Naive thymus-derived CD4-positive, alpha-beta T cell (primary cell): ENCODE measurements at regions of chr1 and their contacts with region 1.

Region 1: DNA sequence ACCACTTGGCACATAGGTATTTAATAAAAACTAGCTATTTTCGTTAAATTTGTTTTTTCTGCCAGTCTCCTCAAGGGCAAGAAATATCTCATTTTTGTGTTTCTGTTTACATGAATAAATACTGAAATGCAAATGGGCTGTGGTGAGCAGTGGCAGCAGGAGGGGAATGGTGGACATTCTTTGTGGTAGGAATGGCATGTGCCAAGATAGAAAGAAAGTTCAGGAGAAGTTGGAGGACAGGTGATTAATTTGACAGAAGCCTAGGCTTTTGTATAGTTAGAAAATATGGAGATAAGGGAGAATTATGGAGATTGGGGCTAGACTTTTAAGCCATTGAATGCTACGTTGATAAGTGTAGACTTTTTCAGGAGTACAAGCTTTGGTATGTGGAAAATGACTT is 8.6 kb downstream of the RAP1A start:
- DNase-seq: no peak
- ATAC-seq: no peak
- H3K4me3 ChIP-seq: no peak overlapping the region
- H3K4me3 Mint-ChIP-seq: peak overlapping the region in 9 of 10 donors; percentile 57 to 86 (median 67)
- H3K27ac ChIP-seq: peak overlapping the region; percentile 59
- H3K27ac Mint-ChIP-seq: peak overlapping the region; percentile 64 to 91 (median 79)
- H3K4me1 ChIP-seq: peaks cover 77 to 86% of the 10 kb centered on the region in 2 donors
- H3K4me1 Mint-ChIP-seq: peaks cover 60 to 97% (median 88%) of the 10 kb centered on the region in 7 donors
- H3K27me3 ChIP-seq: no peaks in the 10 kb centered on the region
- H3K27me3 Mint-ChIP-seq: no peaks in the 10 kb centered on the region

Region 2: DNA sequence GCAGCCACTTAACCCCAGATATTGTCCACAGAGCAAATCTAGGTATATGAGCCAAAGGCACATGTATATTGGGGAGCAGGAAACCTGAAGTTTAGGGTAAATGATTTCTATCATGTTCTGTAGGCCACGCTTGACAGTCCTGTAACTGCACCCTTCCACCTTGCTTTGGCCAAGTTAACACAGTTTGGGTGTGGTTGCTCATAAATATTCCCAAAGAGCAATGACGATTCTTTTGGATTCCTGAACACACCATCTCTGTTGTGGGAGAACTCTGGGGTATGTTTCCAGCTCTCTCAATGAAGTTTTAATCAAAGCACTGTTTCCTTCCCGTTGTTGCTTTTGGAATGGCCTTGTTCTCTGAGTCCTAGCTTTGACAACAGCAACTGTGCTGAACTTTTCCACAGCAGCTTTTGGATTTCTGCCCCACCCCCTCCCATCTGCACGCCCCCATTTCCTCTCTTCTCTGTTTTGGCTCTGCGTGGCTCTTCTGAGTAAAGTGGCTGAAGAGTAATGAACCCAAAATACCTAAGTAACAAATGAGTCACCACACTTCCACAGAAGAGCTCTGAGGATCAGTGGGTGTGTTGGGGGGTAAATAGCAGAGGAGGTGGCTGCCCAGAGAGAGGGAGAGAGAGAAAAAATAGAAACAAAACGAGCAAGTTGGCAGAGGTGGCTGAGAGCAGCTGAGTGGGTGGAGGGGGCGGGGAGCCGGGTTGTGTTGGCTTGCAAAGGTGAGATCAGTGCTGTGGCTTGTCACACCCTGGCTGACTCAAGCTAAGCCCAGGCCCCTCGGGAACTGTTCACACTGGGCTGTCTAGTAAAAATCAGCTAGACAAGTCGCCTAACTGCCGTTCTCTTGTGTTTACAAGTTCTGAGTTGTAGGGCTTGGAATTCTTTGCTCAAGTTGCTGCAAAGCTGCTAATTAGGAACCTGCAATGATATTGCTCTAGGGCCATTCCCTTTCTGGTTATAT is 35.5 kb before region 1 on chr1:
- CTCF ChIA-PET with region 1: interaction called, 4 read pairs
- POLR2A ChIA-PET with region 1: interaction called, 173 read pairs
- intact Hi-C with region 1: no loop called
- DNase-seq: peak; percentile 22 to 86 (median 56)
- ATAC-seq: peak; percentile 91
- H3K4me3 ChIP-seq: peak overlapping the region; percentile 29
- H3K4me3 Mint-ChIP-seq: peak overlapping the region; percentile 52 to 82 (median 78)
- H3K27ac ChIP-seq: peak overlapping the region; percentile 62
- H3K27ac Mint-ChIP-seq: peak overlapping the region; percentile 83 to 95 (median 91)
- H3K4me1 ChIP-seq: peaks cover 55 to 65% of the 10 kb centered on the region in 2 donors
- H3K4me1 Mint-ChIP-seq: peaks cover 46 to 72% (median 62%) of the 10 kb centered on the region in 7 donors
- H3K27me3 ChIP-seq: no peaks in the 10 kb centered on the region
- H3K27me3 Mint-ChIP-seq: peaks cover 0 to 2% (median 0%) of the 10 kb centered on the region in 5 donors

Region 3: GRCh38 chr1:111639602-111640198 is 11.5 kb after region 1 on chr1:
- CTCF ChIA-PET with region 1: interaction called, 4 read pairs
- POLR2A ChIA-PET with region 1: interaction called, 6 read pairs
- intact Hi-C with region 1: loop called in 1 of 2 experiments (anchors 1 kb)
- DNase-seq: no peak
- ATAC-seq: no peak
- H3K4me3 ChIP-seq: no peak overlapping the region
- H3K4me3 Mint-ChIP-seq: peak overlapping the region in 1 of 10 donors; percentile 21
- H3K27ac ChIP-seq: no peak overlapping the region
- H3K27ac Mint-ChIP-seq: peak overlapping the region in 5 of 9 donors; percentile 28 to 59 (median 44)
- H3K4me1 ChIP-seq: peaks cover 37 to 41% of the 10 kb centered on the region in 2 donors
- H3K4me1 Mint-ChIP-seq: peaks cover 43 to 85% (median 75%) of the 10 kb centered on the region in 7 donors
- H3K27me3 ChIP-seq: no peaks in the 10 kb centered on the region
- H3K27me3 Mint-ChIP-seq: no peaks in the 10 kb centered on the region

Region 4: GRCh38 chr1:111648806-111649205 is 20.7 kb after region 1 on chr1:
- CTCF ChIA-PET with region 1: interaction called, 6 read pairs
- POLR2A ChIA-PET with region 1: interaction called, 3 read pairs
- intact Hi-C with region 1: loop called in 1 of 2 experiments (anchors 2 kb)
- DNase-seq: no peak
- ATAC-seq: no peak
- H3K4me3 ChIP-seq: no peak overlapping the region
- H3K4me3 Mint-ChIP-seq: peak overlapping the region in 8 of 10 donors; percentile 56 to 88 (median 66)
- H3K27ac ChIP-seq: no peak overlapping the region
- H3K27ac Mint-ChIP-seq: peak overlapping the region; percentile 28 to 86 (median 77)
- H3K4me1 ChIP-seq: peaks cover 41 to 52% of the 10 kb centered on the region in 2 donors
- H3K4me1 Mint-ChIP-seq: peaks cover 62 to 96% (median 85%) of the 10 kb centered on the region in 7 donors
- H3K27me3 ChIP-seq: no peaks in the 10 kb centered on the region
- H3K27me3 Mint-ChIP-seq: no peaks in the 10 kb centered on the region

Region 5: DNA sequence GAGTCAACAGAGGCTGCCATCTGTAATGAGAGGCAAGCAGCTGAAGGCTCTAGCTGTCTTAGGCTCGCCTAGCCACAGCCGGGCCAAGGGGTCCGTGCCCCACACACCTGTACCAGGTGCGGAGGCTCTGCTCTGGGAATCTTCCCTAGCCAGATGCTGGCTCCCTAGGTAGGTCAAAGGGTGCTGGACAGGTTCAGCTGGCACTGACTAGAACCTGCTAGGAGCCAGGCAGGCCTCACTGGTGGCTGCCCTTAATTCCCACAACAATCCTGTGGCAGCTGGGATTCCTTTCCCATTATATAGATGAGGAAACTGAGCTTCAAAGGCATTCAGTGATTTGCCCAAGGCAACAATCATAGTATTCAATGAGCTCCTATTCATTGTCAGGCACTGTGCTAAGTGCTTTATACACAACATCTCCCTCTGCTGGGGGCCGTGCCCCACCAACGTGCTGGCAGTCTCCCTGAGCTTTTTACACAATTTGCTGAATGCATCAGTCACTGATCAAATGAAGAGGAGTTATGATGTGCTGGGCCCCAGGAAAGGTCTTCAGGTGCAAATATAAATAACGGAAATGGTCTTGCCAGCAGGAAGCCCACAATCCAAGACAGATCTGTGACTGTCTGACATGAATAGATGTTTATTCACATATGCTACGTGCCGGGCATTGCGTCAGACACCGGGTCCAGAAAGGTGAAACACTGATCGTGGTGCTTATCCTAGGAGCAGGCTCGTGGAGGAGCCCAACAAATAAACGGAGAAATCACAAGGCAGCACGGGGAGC is 185.6 kb after region 1 on chr1:
- CTCF ChIA-PET with region 1: no interaction called
- POLR2A ChIA-PET with region 1: no interaction called
- intact Hi-C with region 1: no loop called
- DNase-seq: no peak
- ATAC-seq: no peak
- H3K4me3 ChIP-seq: no peak overlapping the region
- H3K4me3 Mint-ChIP-seq: no peak overlapping the region
- H3K27ac ChIP-seq: no peak overlapping the region
- H3K27ac Mint-ChIP-seq: no peak overlapping the region
- H3K4me1 ChIP-seq: no peaks in the 10 kb centered on the region
- H3K4me1 Mint-ChIP-seq: no peaks in the 10 kb centered on the region
- H3K27me3 ChIP-seq: no peaks in the 10 kb centered on the region
- H3K27me3 Mint-ChIP-seq: peaks cover 0 to 5% (median 4%) of the 10 kb centered on the region in 5 donors